Gastrocnemius medialis (tissue), 4 donors: ENCODE measurements at regions of chr6 and their contacts with region 1.

Region 1: GRCh38 chr6:17423026-17423425 is 29.6 kb downstream of the CAP2 start:
- DNase-seq: no peak
- ATAC-seq: no peak
- H3K4me3 ChIP-seq: no peak overlapping the region
- H3K27ac ChIP-seq: peak overlapping the region; percentile 96 to 98 (median 96)
- H3K4me1 ChIP-seq: peaks cover 45 to 52% of the 10 kb centered on the region in 2 donors
- H3K27me3 ChIP-seq: no peaks in the 10 kb centered on the region
- CTCF ChIP-seq: no peak
- POLR2A ChIP-seq: no peak

Region 2: DNA sequence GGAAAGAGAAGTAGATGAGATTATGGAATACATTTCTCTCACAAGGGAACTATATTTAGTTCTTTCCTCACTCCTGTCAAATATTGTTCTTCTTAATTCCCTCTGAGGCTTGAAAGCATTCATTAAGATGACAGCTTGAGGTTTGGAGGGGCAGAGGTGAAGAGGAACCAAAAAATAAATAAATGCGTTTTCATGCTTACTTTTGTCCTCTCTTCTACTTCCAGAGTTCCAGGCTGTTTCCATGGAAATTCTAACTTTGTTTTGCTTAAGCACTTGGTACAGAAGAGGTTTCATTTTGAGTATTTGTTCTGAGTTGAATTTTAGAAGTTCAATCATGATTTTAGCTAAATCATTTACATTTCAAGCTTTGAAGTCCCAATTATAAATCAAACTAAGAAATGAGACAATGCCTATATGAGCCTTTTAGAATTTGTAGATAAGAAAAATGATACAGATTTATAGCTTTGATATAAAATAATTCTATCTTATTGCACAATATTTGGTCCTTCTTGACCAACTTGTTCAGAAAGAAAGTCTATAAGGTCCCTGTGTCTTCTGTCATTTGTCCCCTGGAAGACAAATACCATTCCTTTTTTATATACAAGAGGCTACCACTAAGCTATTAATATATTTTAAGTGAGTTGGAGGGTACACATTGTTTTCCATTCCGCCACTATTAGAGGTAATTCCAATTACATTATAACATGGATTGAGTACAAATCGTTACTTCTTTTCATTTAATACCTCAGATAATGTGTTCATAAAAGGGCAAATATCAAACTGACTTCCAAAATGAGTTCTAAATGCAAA is 125.5 kb before region 1 on chr6:
- in situ Hi-C with region 1: no loop called
- intact Hi-C with region 1: no loop called
- DNase-seq: no peak
- ATAC-seq: peak; percentile 4 to 20
- H3K4me3 ChIP-seq: no peak overlapping the region
- H3K27ac ChIP-seq: peak overlapping the region; percentile 93 to 100 (median 96)
- H3K4me1 ChIP-seq: peaks cover 14 to 25% of the 10 kb centered on the region in 2 donors
- H3K27me3 ChIP-seq: no peaks in the 10 kb centered on the region
- CTCF ChIP-seq: no peak
- POLR2A ChIP-seq: no peak

Region 3: GRCh38 chr6:17311595-17312311 is 111.3 kb before region 1 on chr6:
- in situ Hi-C with region 1: no loop called
- intact Hi-C with region 1: loop called (anchors 5 kb)
- DNase-seq: peak; percentile 56 to 82
- ATAC-seq: peak; percentile 90 to 96
- H3K4me3 ChIP-seq: peak overlapping the region; percentile 24 to 45 (median 36)
- H3K27ac ChIP-seq: peak overlapping the region; percentile 88 to 97 (median 94)
- H3K4me1 ChIP-seq: peaks cover 9 to 16% of the 10 kb centered on the region in 2 donors
- H3K27me3 ChIP-seq: no peaks in the 10 kb centered on the region
- CTCF ChIP-seq: no peak
- POLR2A ChIP-seq: peak; percentile 76 to 77

Region 4: GRCh38 chr6:17656092-17656491 is 233.1 kb after region 1 on chr6:
- in situ Hi-C with region 1: no loop called
- intact Hi-C with region 1: no loop called
- DNase-seq: no peak
- ATAC-seq: no peak
- H3K4me3 ChIP-seq: no peak overlapping the region
- H3K27ac ChIP-seq: no peak overlapping the region
- H3K4me1 ChIP-seq: no peaks in the 10 kb centered on the region
- H3K27me3 ChIP-seq: no peaks in the 10 kb centered on the region
- CTCF ChIP-seq: no peak
- POLR2A ChIP-seq: no peak